Motor neuron (in vitro differentiated cells): ENCODE measurements at regions of chr1 and their contacts with region 1.

Region 1: DNA sequence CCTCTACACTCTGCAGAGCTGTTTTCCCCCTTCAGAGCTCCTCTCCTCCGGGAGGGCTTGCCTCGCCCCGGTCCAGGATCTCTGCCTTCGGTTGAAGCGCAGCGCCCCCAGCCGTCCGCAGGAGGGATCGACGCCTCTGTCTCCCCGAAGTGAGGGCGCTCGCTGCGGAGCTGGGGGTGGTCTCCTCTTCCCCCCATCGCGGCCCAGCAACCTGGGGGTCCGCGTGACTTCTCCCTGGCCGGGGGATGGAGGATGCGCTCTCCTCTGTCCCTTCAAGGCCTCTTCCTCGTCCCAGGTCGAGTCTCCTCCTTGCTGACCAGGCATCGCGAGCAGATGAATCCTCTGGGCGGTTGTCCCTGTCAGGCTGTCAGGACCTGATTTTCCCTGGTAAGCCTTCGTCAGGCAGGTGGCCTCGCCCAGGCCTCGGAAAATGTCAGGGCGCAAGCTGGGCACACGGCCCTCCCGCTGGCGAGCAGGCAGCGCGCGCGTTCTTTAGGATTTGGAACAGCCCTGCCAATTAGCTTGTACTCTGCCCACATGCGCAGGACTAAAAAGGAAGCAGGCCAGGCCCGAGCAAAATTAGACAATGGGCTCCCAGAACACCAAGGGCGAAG is 90.5 kb downstream of the EDEM3 start:
- ATAC-seq: peak; percentile 91 to 99 (median 96)
- H3K4me3 ChIP-seq: peak overlapping the region in 1 of 5 donors; percentile 6
- H3K27ac ChIP-seq: no peak overlapping the region
- H3K4me1 ChIP-seq: peaks cover 12 to 22% of the 10 kb centered on the region in 2 donors

Region 2: GRCh38 chr1:184075055-184076029 is 588.8 kb before region 1 on chr1:
- in situ Hi-C with region 1: loop called in 7 of 9 experiments (anchors 25 kb)
- ATAC-seq: peak; percentile 53 to 91 (median 70)
- H3K4me3 ChIP-seq: no peak overlapping the region
- H3K27ac ChIP-seq: no peak overlapping the region
- H3K4me1 ChIP-seq: no peaks in the 10 kb centered on the region

Region 3: DNA sequence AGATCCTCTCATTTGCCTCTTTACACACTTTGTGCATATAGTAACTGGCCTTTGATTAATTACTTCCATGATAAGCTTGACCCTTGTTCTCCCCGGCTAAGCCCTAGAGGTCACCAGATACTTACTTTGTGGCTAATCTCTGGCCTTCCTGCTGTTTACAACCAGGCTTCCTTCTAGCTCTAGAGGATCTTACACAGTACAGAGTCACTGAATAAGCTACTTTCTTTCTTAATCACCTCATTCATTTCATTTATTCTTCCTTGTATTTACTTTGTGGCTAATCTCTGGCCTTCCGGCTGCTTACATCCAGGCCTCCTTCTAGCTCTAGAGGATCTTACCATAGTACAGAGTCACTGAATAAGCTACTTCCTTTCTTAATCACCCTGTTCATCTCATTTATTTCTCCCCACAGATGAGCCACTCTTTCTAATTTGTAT is 421.6 kb before region 1 on chr1:
- in situ Hi-C with region 1: loop called in 1 of 9 experiments (anchors 25 kb)
- ATAC-seq: peak in 1 of 8 experiments; percentile 29
- H3K4me3 ChIP-seq: no peak overlapping the region
- H3K27ac ChIP-seq: no peak overlapping the region
- H3K4me1 ChIP-seq: no peaks in the 10 kb centered on the region

Region 4: GRCh38 chr1:184513966-184514365 is 150.2 kb before region 1 on chr1:
- in situ Hi-C with region 1: loop called in 1 of 9 experiments (anchors 25 kb)
- ATAC-seq: peak in 2 of 8 experiments; percentile 72 to 80
- H3K4me3 ChIP-seq: no peak overlapping the region
- H3K27ac ChIP-seq: no peak overlapping the region
- H3K4me1 ChIP-seq: no peaks in the 10 kb centered on the region